BJ (cell line): ENCODE measurements at regions of chr10 and their contacts with region 1.

Region 1: GRCh38 chr10:71212318-71213126 is at the start of gene UNC5B:
- DNase-seq: no peak
- H3K4me3 ChIP-seq: peak within 1 kb of the TSS; percentile 79
- H3K27me3 ChIP-seq: peaks cover 22% of the 10 kb centered on the region
- CTCF ChIP-seq: no peak; the same call in 1 of the 2 replicates
- polyA plus RNA-seq, gene UNC5B: 17.5 and 27.4 TPM in 2 replicates

Region 2: DNA sequence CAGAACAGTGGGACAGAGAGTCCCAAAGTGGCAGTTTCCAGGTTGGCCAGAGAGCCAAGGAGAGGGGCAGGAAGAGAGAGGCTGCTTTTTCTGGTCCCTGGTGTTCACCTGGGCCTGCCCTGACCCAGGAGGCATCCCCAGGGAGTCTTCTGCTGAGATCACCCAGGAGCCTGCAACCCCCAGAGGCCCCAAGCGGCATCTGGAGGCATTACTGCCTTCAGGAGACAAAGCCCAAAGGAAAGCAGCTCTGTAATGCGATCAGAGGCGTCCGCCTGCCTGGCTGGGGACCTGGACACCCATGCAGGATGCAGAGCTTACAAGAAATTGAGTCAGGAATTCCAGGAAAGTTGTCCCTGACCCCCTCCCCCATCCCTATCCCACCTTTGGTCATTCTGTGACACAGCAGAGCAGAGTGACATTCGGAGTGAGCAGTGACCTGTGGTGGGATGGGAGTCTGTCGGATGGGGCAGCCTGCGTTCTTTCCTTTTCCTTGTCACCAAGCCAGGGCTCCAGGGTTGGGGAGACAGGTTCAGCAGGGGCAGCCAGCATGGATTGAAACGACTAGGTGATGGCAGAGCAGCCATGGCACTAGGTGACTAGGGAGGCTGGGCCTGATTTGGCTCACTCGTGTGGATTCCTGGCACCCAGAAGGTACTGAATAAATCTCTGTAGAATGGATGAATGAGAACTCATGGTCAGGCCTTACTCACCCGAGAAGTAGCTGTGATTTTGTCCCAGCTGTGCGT is 10.3 kb after region 1 on chr10:
- CTCF ChIA-PET with region 1: interaction called, 11 read pairs
- POLR2A ChIA-PET with region 1: no interaction called
- DNase-seq: no peak
- H3K4me3 ChIP-seq: no peak overlapping the region
- H3K27me3 ChIP-seq: no peaks in the 10 kb centered on the region
- CTCF ChIP-seq: no peak

Region 3: DNA sequence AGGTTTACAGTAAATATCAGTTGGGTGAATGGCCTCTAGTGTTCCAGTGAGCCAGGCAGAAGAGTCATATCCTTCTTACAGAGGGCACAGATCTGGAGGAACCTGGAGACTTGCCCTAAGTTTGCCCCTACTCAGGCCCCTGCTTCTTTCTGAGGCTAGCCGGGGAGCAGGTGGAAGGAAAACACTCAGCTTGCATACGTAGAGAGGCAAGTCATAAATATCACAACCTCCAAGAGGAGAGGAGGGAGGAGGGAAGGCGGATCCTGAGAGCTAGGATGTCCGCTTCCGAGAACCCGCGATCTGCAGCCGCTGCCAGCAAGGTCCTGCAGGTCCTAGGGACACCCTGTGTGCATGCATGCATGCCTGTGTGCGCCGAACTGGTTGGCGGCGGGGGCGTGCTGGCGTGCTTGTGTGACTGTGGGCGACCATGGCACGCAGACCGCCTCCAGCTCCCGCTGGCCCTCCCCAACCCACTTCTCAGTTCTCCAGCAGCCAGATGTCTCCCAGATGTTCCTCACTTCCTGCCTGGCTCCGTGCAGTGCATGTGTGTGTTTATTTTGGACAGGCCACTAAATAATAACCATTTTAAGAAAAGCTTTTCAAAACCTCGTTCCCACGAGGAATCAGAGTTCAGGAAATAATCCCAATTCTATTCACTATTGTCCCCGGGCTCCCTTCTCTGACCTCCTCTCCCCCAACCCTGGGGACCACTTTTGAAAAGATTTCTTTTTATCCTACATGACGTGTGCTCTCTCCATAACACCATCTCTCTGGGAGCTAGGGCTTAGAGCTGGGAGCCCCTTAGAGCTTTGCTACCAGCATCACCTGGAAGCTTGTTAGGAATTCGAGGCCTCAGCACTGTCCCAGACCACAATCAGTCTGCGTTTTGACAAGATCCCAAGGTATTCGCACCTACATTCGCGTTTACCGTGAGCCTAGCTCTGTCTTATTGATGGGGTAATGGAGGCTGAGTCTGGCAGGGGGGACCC is 32.2 kb after region 1 on chr10:
- CTCF ChIA-PET with region 1: interaction called, 10 read pairs
- POLR2A ChIA-PET with region 1: no interaction called
- DNase-seq: peak; percentile 94
- H3K4me3 ChIP-seq: no peak overlapping the region
- H3K27me3 ChIP-seq: no peaks in the 10 kb centered on the region
- CTCF ChIP-seq: no peak

Region 4: GRCh38 chr10:71270301-71271220 is 58.0 kb after region 1 on chr10:
- CTCF ChIA-PET with region 1: interaction called, 78 read pairs
- POLR2A ChIA-PET with region 1: no interaction called
- DNase-seq: no peak
- H3K4me3 ChIP-seq: no peak overlapping the region
- H3K27me3 ChIP-seq: no peaks in the 10 kb centered on the region
- CTCF ChIP-seq: peak; percentile 81